CD4-positive, alpha-beta T cell (primary cell): ENCODE measurements at regions of chr18 and their contacts with region 1.

Region 1: DNA sequence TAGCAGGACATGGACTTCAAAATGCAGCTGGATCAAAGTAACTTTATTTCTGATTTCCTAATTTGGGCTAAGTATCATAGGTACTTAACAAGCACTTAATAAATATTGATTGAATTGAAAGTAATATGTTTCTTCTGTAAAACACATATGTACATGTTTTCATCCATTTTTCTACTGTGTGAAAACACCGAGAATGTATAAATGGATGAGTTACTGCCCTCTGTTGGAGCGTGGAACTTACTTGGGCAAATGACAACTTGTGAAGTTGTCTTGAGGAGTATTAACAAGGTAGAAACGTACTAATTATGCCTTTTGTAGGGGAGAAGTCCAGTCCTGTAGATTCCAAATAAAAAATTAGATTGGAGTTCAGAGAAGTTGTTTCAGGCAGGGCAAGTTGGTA is 87.2 kb downstream of the PHLPP1 start:
- DNase-seq: peak in 2 of 14 experiments; percentile 16 to 19
- ATAC-seq: no peak
- H3K4me3 ChIP-seq: no peak overlapping the region
- H3K4me3 Mint-ChIP-seq: no peak overlapping the region
- H3K27ac ChIP-seq: no peak overlapping the region
- H3K27ac Mint-ChIP-seq: no peak overlapping the region
- H3K4me1 ChIP-seq: no peaks in the 10 kb centered on the region
- H3K4me1 Mint-ChIP-seq: no peaks in the 10 kb centered on the region
- H3K27me3 ChIP-seq: no peaks in the 10 kb centered on the region
- H3K27me3 Mint-ChIP-seq: no peaks in the 10 kb centered on the region
- CTCF ChIP-seq: no peak

Region 2: GRCh38 chr18:62863579-62864001 is 61.1 kb after region 1 on chr18:
- CTCF ChIA-PET with region 1: no interaction called
- POLR2A ChIA-PET with region 1: no interaction called
- intact Hi-C with region 1: loop called in 1 of 2 experiments (anchors 10 kb)
- DNase-seq: no peak
- ATAC-seq: no peak
- H3K4me3 ChIP-seq: no peak overlapping the region
- H3K4me3 Mint-ChIP-seq: no peak overlapping the region
- H3K27ac ChIP-seq: no peak overlapping the region
- H3K27ac Mint-ChIP-seq: no peak overlapping the region
- H3K4me1 ChIP-seq: no peaks in the 10 kb centered on the region
- H3K4me1 Mint-ChIP-seq: no peaks in the 10 kb centered on the region
- H3K27me3 ChIP-seq: no peaks in the 10 kb centered on the region
- H3K27me3 Mint-ChIP-seq: no peaks in the 10 kb centered on the region
- CTCF ChIP-seq: no peak